ENCODE measurements at regions of chr16 and their contacts with region 1.

Region 1: GRCh38 chr16:84308120-84308519 is 13.4 kb downstream of the WFDC1 start:
- DNase-seq: peak; percentile 57 to 87
- H3K4me3 ChIP-seq: no peak overlapping the region
- H3K27ac ChIP-seq: peak overlapping the region in 1 of 2 donors; percentile 21
- H3K4me1 ChIP-seq: peaks cover 0 to 60% (median 26%) of the 10 kb centered on the region in 4 donors
- H3K27me3 ChIP-seq: no peaks in the 10 kb centered on the region
- CTCF ChIP-seq: peak; percentile 76 to 80

Region 2: GRCh38 chr16:84186685-84187437 is 121.3 kb before region 1 on chr16 and contains the start of gene TAF1C:
- intact Hi-C with region 1: loop called (anchors 10 kb)
- DNase-seq: peak; percentile 93 to 95
- H3K4me3 ChIP-seq: peak within 1 kb of the TSS; percentile 92 to 94
- H3K27ac ChIP-seq: peak within 1 kb of the TSS; percentile 76 to 90
- H3K4me1 ChIP-seq: peaks cover 0 to 22% (median 10%) of the 10 kb centered on the region in 4 donors
- H3K27me3 ChIP-seq: no peaks in the 10 kb centered on the region
- CTCF ChIP-seq: peak; percentile 96 to 98

Region 3: GRCh38 chr16:84271866-84272265 is 36.3 kb before region 1 on chr16:
- intact Hi-C with region 1: loop called (anchors 2 kb)
- DNase-seq: no peak
- H3K4me3 ChIP-seq: no peak overlapping the region
- H3K27ac ChIP-seq: no peak overlapping the region
- H3K4me1 ChIP-seq: no peaks in the 10 kb centered on the region
- H3K27me3 ChIP-seq: peaks cover 0 to 12% of the 10 kb centered on the region in 2 donors
- CTCF ChIP-seq: no peak

Region 4: DNA sequence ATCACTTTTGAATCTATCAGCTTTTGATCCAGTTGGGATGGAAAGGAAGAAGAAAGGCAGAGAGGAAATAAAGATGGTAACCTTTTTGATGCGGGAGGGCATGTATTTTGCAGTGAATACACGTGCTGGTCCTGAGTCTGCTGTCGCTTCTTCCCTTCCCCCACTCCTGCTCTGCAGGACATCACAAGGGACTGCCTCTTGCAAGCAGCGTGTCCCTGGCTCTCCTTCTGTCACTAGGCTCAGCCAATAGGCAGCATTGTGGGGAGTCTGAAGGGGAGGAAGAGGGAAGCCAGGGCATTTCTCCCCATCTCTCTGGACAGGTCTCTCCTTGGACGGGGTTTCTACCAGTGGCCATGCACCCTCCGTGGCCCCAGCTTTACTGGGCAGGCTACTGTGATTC is 29.2 kb before region 1 on chr16:
- intact Hi-C with region 1: loop called (anchors 2 kb)
- DNase-seq: no peak
- H3K4me3 ChIP-seq: no peak overlapping the region
- H3K27ac ChIP-seq: no peak overlapping the region
- H3K4me1 ChIP-seq: peaks cover 0 to 5% (median 3%) of the 10 kb centered on the region in 4 donors
- H3K27me3 ChIP-seq: peaks cover 0 to 5% of the 10 kb centered on the region in 2 donors
- CTCF ChIP-seq: no peak

Measured in tibial artery (tissue), 4 donors.